Psoas muscle (tissue), 8 donors: ENCODE measurements at regions of chr20 and their contacts with region 1.

Region 1: GRCh38 chr20:53869466-53870258 is 200.7 kb downstream of the BCAS1 start:
- DNase-seq: peak in 1 of 2 donors; percentile 31
- ATAC-seq: peak; percentile 65 to 80 (median 74)
- H3K4me3 ChIP-seq: no peak overlapping the region
- H3K27ac ChIP-seq: no peak overlapping the region
- H3K4me1 ChIP-seq: peaks cover 8% of the 10 kb centered on the region
- H3K27me3 ChIP-seq: no peaks in the 10 kb centered on the region
- CTCF ChIP-seq: peak; percentile 66

Region 2: DNA sequence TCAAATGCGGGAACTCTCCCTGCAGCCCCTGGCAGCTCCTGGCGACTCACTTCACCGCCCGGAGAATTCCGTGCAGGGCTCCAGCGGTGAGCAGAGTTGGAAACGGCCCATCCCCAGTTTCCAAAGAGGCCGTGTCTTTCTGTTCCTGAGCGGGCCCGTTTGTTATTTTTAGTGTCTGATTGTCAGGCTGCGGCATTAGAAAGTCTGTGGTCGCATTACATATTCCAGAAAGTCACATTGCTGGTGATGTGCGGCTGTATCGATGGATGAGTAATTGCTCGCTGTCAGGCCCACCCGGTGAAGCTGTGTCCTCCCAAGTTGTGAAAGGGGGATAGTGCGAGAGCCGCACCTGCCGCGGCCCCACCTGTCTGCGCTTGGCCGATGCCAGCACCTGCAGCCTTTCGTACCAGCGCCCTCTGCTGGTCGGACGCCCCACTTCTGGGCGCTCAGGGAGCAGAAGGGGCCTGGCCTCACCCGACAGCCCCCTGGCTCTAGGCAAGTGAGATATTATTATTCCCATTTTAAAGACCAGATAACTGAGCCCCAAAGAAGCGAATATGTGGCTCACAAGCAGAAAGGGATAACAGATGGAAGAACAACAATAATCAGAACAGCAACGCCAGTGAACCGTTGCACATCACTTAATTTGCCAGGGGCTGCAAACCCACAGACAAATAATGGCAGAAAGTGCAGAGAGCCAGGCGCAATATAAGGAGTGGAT is 652.6 kb before region 1 on chr20:
- intact Hi-C with region 1: no loop called
- DNase-seq: peak; percentile 69 to 74
- ATAC-seq: peak; percentile 57 to 76 (median 70)
- H3K4me3 ChIP-seq: peak overlapping the region; percentile 12
- H3K27ac ChIP-seq: no peak overlapping the region
- H3K4me1 ChIP-seq: no peaks in the 10 kb centered on the region
- H3K27me3 ChIP-seq: no peaks in the 10 kb centered on the region
- CTCF ChIP-seq: peak; percentile 70

Region 3: GRCh38 chr20:53708129-53708968 is 161.3 kb before region 1 on chr20:
- intact Hi-C with region 1: no loop called
- DNase-seq: no peak
- ATAC-seq: no peak
- H3K4me3 ChIP-seq: no peak overlapping the region
- H3K27ac ChIP-seq: no peak overlapping the region
- H3K4me1 ChIP-seq: no peaks in the 10 kb centered on the region
- H3K27me3 ChIP-seq: no peaks in the 10 kb centered on the region
- CTCF ChIP-seq: no peak

Region 4: DNA sequence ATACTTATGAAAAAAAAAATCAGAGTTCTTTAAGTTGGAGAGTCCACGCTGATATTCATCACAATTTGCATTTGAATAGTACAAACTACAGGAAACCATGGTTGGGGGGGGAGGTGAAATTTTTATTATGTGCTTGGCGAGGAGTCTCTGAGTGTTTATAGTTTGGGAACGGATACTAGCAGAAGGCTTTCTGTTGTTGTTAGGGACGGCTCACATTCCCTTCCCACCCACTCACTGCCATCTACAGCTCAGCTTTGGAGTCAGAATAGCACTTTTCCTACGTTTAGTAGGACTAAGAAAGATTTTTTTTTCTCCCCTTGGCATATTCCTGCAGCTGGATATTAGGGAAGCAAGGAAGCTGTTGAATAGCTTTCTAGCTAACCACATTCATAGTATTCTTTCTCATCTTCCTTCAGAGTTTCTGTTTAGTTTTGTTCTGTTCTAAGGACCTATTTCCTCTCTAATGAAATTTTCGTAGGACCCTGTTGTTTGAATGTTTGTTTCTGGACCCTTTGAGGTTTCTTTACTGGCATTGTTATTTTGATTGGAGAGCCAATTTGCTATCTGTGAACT is 40.9 kb before region 1 on chr20:
- intact Hi-C with region 1: no loop called
- DNase-seq: no peak
- ATAC-seq: peak; percentile 52 to 72 (median 58)
- H3K4me3 ChIP-seq: peak overlapping the region; percentile 46
- H3K27ac ChIP-seq: peak overlapping the region; percentile 66
- H3K4me1 ChIP-seq: peaks cover 20% of the 10 kb centered on the region
- H3K27me3 ChIP-seq: no peaks in the 10 kb centered on the region
- CTCF ChIP-seq: no peak

Region 5: GRCh38 chr20:53894707-53895393 is 25.2 kb after region 1 on chr20:
- intact Hi-C with region 1: loop called in 1 of 2 experiments (anchors 1 kb)
- DNase-seq: no peak
- ATAC-seq: no peak
- H3K4me3 ChIP-seq: no peak overlapping the region
- H3K27ac ChIP-seq: no peak overlapping the region
- H3K4me1 ChIP-seq: peaks cover 11% of the 10 kb centered on the region
- H3K27me3 ChIP-seq: no peaks in the 10 kb centered on the region
- CTCF ChIP-seq: no peak